Activated B cell treated with CpG ODN at 0.5 μM for 24 hours (primary cell): ENCODE measurements at regions of chr1 and their contacts with region 1.

Region 1: GRCh38 chr1:3746830-3747521 is 5.3 kb upstream of the CCDC27 start:
- DNase-seq: peak; percentile 83
- ATAC-seq: peak; percentile 98
- H3K4me3 Mint-ChIP-seq: peak overlapping the region; percentile 82
- H3K27ac Mint-ChIP-seq: peak overlapping the region; percentile 61
- H3K4me1 Mint-ChIP-seq: peaks cover 29% of the 10 kb centered on the region
- H3K27me3 Mint-ChIP-seq: no peaks in the 10 kb centered on the region
- CTCF ChIP-seq: no peak

Region 2: DNA sequence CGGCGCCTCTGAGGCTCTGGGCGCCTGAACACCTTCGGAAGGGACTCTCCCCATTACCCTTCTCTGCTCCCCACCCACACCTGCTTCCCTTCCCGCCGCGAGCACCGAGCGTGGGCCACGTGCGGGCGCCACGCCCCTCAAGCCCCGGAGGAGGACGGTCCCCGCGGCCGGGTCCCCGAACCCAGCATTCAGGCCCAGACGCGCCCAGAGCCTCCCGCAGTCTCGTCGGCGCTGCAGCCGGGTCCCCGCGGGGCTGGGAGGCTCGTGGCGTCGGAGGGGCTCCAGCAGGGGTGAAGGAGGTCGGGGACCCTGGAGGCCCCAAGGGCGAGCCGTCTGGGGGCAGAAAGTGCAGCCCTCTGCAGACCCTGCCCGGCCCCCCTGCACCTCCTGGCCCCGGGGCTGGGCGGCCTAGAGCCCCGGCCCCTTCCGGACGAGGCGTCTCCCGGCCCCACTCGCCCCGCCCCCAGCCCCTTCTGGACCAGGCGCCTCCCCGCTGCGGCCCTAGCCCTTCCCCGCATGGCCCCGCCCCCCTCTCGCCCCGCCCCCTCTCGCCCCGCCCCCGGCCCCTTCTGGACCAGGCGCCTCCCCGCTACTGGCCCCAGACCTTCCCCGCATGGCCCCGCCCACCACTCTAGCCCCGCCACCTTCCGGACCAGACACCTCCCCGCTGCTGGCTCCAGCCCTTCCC is 25.2 kb after region 1 on chr1:
- CTCF ChIA-PET with region 1: no interaction called
- POLR2A ChIA-PET with region 1: interaction called, 3 read pairs
- intact Hi-C with region 1: loop called (anchors 1 kb)
- DNase-seq: peak; percentile 87
- ATAC-seq: peak; percentile 89
- H3K4me3 Mint-ChIP-seq: peak overlapping the region; percentile 76
- H3K27ac Mint-ChIP-seq: no peak overlapping the region
- H3K4me1 Mint-ChIP-seq: peaks cover 18% of the 10 kb centered on the region
- H3K27me3 Mint-ChIP-seq: peaks cover 5% of the 10 kb centered on the region
- CTCF ChIP-seq: no peak

Region 3: DNA sequence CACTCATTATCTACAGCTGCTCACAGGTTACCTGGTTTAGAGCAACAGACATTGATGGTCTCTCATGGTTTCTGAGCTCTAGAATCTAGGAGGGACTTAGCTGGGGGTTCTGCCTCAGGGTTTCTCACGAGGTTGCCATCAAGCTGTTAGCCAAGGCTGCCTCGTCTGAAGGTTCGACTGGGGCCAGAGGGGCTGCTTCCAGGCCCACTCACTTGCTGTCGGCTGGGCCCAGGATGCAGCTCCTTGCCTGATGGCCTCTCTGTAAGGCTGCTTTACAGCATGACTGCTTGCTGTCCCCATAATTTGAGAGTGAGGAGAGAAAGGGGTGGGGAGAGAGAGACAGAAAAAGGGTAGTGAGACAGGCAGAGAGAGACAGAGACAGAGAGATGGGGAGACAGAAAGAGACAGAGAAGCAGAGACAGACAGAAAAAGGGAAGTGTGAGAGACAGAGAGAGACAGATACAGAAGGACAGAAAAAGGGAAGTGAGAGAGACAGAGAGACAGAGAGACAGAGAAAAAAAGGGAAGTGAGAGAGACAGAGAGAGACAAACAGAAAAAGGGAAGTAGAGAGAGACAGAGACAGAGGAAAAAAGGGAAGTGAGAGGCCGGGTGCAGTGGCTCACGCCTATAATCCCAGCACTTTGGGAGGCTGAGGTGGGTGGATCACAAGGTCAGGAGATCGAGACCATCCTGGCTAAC is 259.8 kb after region 1 on chr1:
- CTCF ChIA-PET with region 1: no interaction called
- POLR2A ChIA-PET with region 1: no interaction called
- intact Hi-C with region 1: no loop called
- DNase-seq: no peak
- ATAC-seq: peak; percentile 62
- H3K4me3 Mint-ChIP-seq: peak overlapping the region; percentile 50
- H3K27ac Mint-ChIP-seq: peak overlapping the region; percentile 93
- H3K4me1 Mint-ChIP-seq: peaks cover 28% of the 10 kb centered on the region
- H3K27me3 Mint-ChIP-seq: no peaks in the 10 kb centered on the region
- CTCF ChIP-seq: no peak